CD4-positive, alpha-beta memory T cell (primary cell): ENCODE measurements at regions of chr9 and their contacts with region 1.

Region 1: DNA sequence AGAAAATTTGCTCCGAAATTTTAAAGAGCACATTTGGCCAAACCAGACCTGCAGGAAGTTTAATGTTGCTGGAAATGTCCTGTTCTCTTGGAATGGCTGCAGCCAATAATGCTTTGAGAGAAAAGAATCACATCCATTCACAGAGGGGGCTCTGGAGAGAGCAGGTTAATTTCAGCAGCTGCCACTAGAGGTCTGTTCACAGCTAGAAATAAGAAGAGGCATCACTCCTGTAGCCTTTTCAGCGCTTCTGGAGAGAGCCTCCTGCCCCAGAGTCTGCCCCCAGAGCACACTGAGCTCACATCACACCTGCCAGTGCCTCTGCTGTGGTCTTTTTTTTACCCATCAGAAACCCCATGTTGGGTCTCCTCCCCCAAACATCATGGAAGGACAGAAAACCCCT is 124.8 kb upstream of the RAD23B start:
- DNase-seq: no peak
- H3K4me3 ChIP-seq: no peak overlapping the region
- H3K4me3 Mint-ChIP-seq: no peak overlapping the region
- H3K27ac ChIP-seq: no peak overlapping the region
- H3K27ac Mint-ChIP-seq: no peak overlapping the region
- H3K4me1 ChIP-seq: no peaks in the 10 kb centered on the region
- H3K4me1 Mint-ChIP-seq: no peaks in the 10 kb centered on the region
- H3K27me3 ChIP-seq: no peaks in the 10 kb centered on the region
- H3K27me3 Mint-ChIP-seq: peaks cover 4% of the 10 kb centered on the region in 2 donors

Region 2: DNA sequence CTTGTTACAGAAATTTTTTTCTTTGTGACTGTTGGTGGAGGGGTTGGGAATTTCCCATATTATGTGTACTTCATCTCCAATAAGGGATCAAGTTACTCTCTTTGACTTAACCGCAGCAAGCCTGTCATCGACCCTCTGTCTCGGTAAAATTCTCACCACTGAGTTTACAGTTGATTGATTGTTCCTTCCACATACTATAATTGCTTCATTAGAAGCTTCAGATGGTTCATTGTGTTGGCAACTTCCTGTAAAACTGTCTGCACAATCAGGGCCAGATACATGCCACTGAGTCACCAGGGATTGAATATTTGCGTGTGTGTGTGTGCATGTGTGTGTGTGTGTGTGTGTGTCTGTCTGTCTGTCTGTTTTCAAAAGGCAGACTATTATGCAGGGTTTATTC is 118.8 kb before region 1 on chr9:
- CTCF ChIA-PET with region 1: no interaction called
- POLR2A ChIA-PET with region 1: no interaction called
- intact Hi-C with region 1: no loop called
- DNase-seq: no peak
- H3K4me3 ChIP-seq: no peak overlapping the region
- H3K4me3 Mint-ChIP-seq: no peak overlapping the region
- H3K27ac ChIP-seq: no peak overlapping the region
- H3K27ac Mint-ChIP-seq: no peak overlapping the region
- H3K4me1 ChIP-seq: no peaks in the 10 kb centered on the region
- H3K4me1 Mint-ChIP-seq: no peaks in the 10 kb centered on the region
- H3K27me3 ChIP-seq: no peaks in the 10 kb centered on the region
- H3K27me3 Mint-ChIP-seq: peaks cover 2% of the 10 kb centered on the region in 2 donors

Region 3: DNA sequence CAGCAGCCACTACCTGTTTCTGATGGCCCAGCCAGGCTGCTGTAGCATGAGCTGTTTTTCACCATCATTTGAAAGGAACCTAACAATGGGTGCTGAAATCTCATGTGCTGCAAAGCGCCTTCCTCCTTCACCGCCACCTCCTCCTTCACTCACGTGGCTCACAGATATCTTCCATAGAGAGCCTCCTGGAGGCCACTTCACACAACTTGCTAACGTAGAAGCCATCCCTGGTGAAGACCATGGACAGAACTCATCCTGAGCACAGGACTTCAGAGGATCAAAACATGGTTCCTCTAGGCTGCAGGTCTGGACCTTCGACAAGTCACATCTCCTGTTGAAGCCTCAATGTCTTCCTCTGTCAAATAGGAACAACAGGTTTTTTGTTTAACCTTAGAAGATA is 30.7 kb before region 1 on chr9:
- CTCF ChIA-PET with region 1: no interaction called
- POLR2A ChIA-PET with region 1: no interaction called
- intact Hi-C with region 1: no loop called
- DNase-seq: no peak
- H3K4me3 ChIP-seq: no peak overlapping the region
- H3K4me3 Mint-ChIP-seq: no peak overlapping the region
- H3K27ac ChIP-seq: no peak overlapping the region
- H3K27ac Mint-ChIP-seq: no peak overlapping the region
- H3K4me1 ChIP-seq: no peaks in the 10 kb centered on the region
- H3K4me1 Mint-ChIP-seq: no peaks in the 10 kb centered on the region
- H3K27me3 ChIP-seq: no peaks in the 10 kb centered on the region
- H3K27me3 Mint-ChIP-seq: peaks cover 3 to 6% of the 10 kb centered on the region in 2 donors

Region 4: GRCh38 chr9:107172160-107172978 is 14.0 kb after region 1 on chr9:
- CTCF ChIA-PET with region 1: interaction called, 12 read pairs
- POLR2A ChIA-PET with region 1: no interaction called
- intact Hi-C with region 1: no loop called
- DNase-seq: peak; percentile 21 to 52 (median 35)
- H3K4me3 ChIP-seq: no peak overlapping the region
- H3K4me3 Mint-ChIP-seq: no peak overlapping the region
- H3K27ac ChIP-seq: no peak overlapping the region
- H3K27ac Mint-ChIP-seq: no peak overlapping the region
- H3K4me1 ChIP-seq: no peaks in the 10 kb centered on the region
- H3K4me1 Mint-ChIP-seq: peaks cover 0 to 2% (median under 1%) of the 10 kb centered on the region in 4 donors
- H3K27me3 ChIP-seq: no peaks in the 10 kb centered on the region
- H3K27me3 Mint-ChIP-seq: peaks cover 1 to 11% of the 10 kb centered on the region in 2 donors